ENCODE measurements at regions of chr12 and their contacts with region 1.

Region 1: DNA sequence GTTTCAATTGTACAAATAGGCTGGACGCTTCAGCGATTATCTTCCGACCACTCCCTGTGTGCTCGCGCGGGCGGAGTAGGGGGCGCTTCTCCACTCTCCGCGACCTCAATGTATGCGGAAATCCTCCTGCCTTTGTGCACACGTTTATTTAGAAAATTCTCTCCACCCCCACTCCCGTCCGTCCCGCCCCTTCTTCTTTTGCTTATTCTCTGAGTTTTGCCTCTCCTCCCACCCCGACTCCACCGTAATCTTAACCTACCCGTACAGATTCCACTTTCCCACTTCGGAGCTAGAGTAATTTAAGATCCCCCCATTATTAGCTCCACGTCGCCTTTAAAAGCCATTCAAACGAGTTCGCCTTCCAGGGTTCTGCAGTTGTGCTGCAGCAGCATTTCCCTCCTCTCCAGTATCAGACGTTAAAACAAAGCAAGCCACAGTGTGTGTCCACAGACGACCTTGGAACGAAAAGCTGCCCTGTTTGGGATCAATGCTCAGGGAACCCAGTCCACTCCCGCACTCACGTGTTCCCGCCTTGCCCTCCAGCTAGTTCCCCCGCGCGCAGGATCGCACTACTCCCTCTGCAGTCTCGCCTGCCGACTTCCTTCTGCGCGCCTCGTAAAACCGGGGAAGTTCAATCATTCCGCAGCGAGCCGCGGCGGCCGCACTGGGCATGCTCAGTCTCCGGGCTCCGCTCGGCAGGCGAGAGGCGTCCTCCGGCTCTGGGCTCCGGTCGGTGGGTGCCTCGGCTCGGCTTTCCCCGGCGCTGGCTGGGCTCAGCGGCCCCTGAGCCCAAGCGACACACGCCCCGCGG is at the start of gene ANO6:
- DNase-seq: peak; percentile 81 to 91 (median 85)
- ATAC-seq: peak; percentile 87
- H3K4me3 ChIP-seq: peak within 1 kb of the TSS; percentile 85
- H3K27ac ChIP-seq: peak within 1 kb of the TSS; percentile 97
- H3K4me1 ChIP-seq: peaks cover 9 to 12% of the 10 kb centered on the region in 2 experiments; a peak in 4 of 5 replicates
- H3K27me3 ChIP-seq: no peaks in the 10 kb centered on the region
- CTCF ChIP-seq: peak; percentile 29 to 61 (median 54); a peak in 5 of 6 replicates
- EP300 ChIP-seq: peak; percentile 46; the same call in 1 of the 2 replicates
- POLR2A ChIP-seq: peak; percentile 89
- RAD21 ChIP-seq: peak in 1 of 2 experiments; percentile 40; a peak in 3 of 4 replicates
- polyA plus RNA-seq, gene ANO6: 3.5 to 5.6 TPM

Region 2: GRCh38 chr12:45089411-45090115 is 126.1 kb before region 1 on chr12:
- CTCF ChIA-PET with region 1: no interaction called
- POLR2A ChIA-PET with region 1: no interaction called
- in situ Hi-C with region 1: no loop called
- intact Hi-C with region 1: no loop called
- DNase-seq: no peak
- ATAC-seq: no peak
- H3K4me3 ChIP-seq: no peak overlapping the region
- H3K27ac ChIP-seq: no peak overlapping the region
- H3K4me1 ChIP-seq: no peaks in the 10 kb centered on the region
- H3K27me3 ChIP-seq: no peaks in the 10 kb centered on the region
- CTCF ChIP-seq: no peak
- EP300 ChIP-seq: no peak
- POLR2A ChIP-seq: no peak
- RAD21 ChIP-seq: no peak

Region 3: GRCh38 chr12:45170456-45171042 is 45.1 kb before region 1 on chr12:
- CTCF ChIA-PET with region 1: interaction called, 3 read pairs
- POLR2A ChIA-PET with region 1: no interaction called
- in situ Hi-C with region 1: no loop called
- intact Hi-C with region 1: loop called (anchors 1 kb)
- DNase-seq: peak; percentile 69 to 83 (median 78)
- ATAC-seq: peak; percentile 93
- H3K4me3 ChIP-seq: no peak overlapping the region
- H3K27ac ChIP-seq: no peak overlapping the region
- H3K4me1 ChIP-seq: peaks cover 0 to 3% of the 10 kb centered on the region in 2 experiments; a peak in 1 of 5 replicates
- H3K27me3 ChIP-seq: no peaks in the 10 kb centered on the region
- CTCF ChIP-seq: peak; percentile 78 to 87 (median 86)
- EP300 ChIP-seq: no peak
- POLR2A ChIP-seq: no peak
- RAD21 ChIP-seq: peak; percentile 81 to 89

Region 4: GRCh38 chr12:45227316-45228067 is 11.9 kb after region 1 on chr12:
- CTCF ChIA-PET with region 1: no interaction called
- POLR2A ChIA-PET with region 1: interaction called, 14 read pairs
- in situ Hi-C with region 1: no loop called
- intact Hi-C with region 1: no loop called
- DNase-seq: peak in 2 of 4 experiments; percentile 40 to 63
- ATAC-seq: peak; percentile 84
- H3K4me3 ChIP-seq: no peak overlapping the region
- H3K27ac ChIP-seq: peak overlapping the region; percentile 13; the same call in 1 of the 3 replicates
- H3K4me1 ChIP-seq: peaks cover 4 to 22% of the 10 kb centered on the region in 2 experiments; a peak in 4 of 5 replicates
- H3K27me3 ChIP-seq: no peaks in the 10 kb centered on the region
- CTCF ChIP-seq: no peak
- EP300 ChIP-seq: peak; percentile 76
- POLR2A ChIP-seq: no peak
- RAD21 ChIP-seq: no peak

Region 5: DNA sequence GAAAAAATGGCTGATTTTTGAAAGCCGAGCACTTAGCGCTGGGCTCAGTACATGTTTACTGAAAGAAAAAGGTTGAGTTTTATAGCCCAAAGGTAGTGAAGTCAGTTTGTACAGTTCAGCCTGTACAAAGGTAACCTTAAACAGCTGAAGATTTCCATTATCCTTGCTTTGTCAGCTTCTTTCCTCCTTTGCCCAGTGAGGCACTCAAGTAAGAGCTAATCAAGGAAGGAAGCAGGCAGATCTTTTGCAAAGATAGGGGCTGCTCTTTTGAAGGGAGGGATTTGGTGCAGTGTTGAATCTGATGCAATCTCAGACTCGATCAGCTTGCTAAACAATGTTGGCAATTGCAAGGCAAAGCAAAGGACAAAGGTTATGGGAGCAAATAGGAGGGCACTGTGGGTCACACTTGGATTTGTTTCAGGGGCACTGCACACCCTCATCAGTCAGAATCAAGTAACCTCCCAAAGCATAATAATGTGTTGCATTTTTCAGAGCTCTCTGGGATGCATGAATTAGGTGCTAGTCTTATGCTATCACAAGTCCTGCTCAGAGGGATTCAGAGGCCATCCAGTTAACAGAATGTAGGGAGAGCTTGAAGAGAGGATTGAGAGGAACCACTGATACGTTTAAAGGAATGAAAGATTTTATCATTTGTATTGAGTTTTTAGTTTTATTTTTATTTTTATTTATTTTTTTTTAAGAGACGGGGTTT is 44.6 kb after region 1 on chr12:
- CTCF ChIA-PET with region 1: no interaction called
- POLR2A ChIA-PET with region 1: no interaction called
- in situ Hi-C with region 1: no loop called
- intact Hi-C with region 1: loop called (anchors 5 kb)
- DNase-seq: no peak
- ATAC-seq: peak; percentile 71
- H3K4me3 ChIP-seq: no peak overlapping the region
- H3K27ac ChIP-seq: no peak overlapping the region
- H3K4me1 ChIP-seq: peaks cover 4 to 25% of the 10 kb centered on the region in 2 experiments; a peak in 3 of 5 replicates
- H3K27me3 ChIP-seq: no peaks in the 10 kb centered on the region
- CTCF ChIP-seq: no peak
- EP300 ChIP-seq: no peak; the same call in 1 of the 2 replicates
- POLR2A ChIP-seq: no peak
- RAD21 ChIP-seq: no peak

Region 6: GRCh38 chr12:45336331-45337064 is 120.9 kb after region 1 on chr12:
- CTCF ChIA-PET with region 1: interaction called, 3 read pairs
- POLR2A ChIA-PET with region 1: no interaction called
- in situ Hi-C with region 1: no loop called
- intact Hi-C with region 1: loop called (anchors 5 kb)
- DNase-seq: peak in 2 of 4 experiments; percentile 14 to 54
- ATAC-seq: peak; percentile 79
- H3K4me3 ChIP-seq: no peak overlapping the region
- H3K27ac ChIP-seq: peak overlapping the region; percentile 80; the same call in 2 of the 3 replicates
- H3K4me1 ChIP-seq: peaks cover 0 to 28% of the 10 kb centered on the region in 2 experiments; a peak in 3 of 5 replicates
- H3K27me3 ChIP-seq: no peaks in the 10 kb centered on the region
- CTCF ChIP-seq: no peak
- EP300 ChIP-seq: no peak
- POLR2A ChIP-seq: no peak
- RAD21 ChIP-seq: no peak

Region 7: GRCh38 chr12:45728630-45729232 is 513.1 kb after region 1 on chr12:
- CTCF ChIA-PET with region 1: no interaction called
- POLR2A ChIA-PET with region 1: no interaction called
- in situ Hi-C with region 1: no loop called
- intact Hi-C with region 1: loop called (anchors 5 kb)
- DNase-seq: peak; percentile 72 to 97 (median 80)
- ATAC-seq: peak; percentile 73
- H3K4me3 ChIP-seq: peak overlapping the region; percentile 71
- H3K27ac ChIP-seq: peak overlapping the region; percentile 95
- H3K4me1 ChIP-seq: peaks cover 4 to 6% of the 10 kb centered on the region in 2 experiments; a peak in 3 of 5 replicates
- H3K27me3 ChIP-seq: no peaks in the 10 kb centered on the region
- CTCF ChIP-seq: peak; percentile 89 to 98 (median 97)
- EP300 ChIP-seq: peak; percentile 72
- POLR2A ChIP-seq: peak; percentile 95
- RAD21 ChIP-seq: peak; percentile 43 to 61

Region 8: GRCh38 chr12:46259713-46260112 is 1044.1 kb after region 1 on chr12:
- CTCF ChIA-PET with region 1: no interaction called
- POLR2A ChIA-PET with region 1: no interaction called
- in situ Hi-C with region 1: no loop called
- intact Hi-C with region 1: loop called (anchors 10 kb)
- DNase-seq: peak in 2 of 4 experiments; percentile 36 to 57
- ATAC-seq: peak; percentile 40
- H3K4me3 ChIP-seq: no peak overlapping the region
- H3K27ac ChIP-seq: no peak overlapping the region
- H3K4me1 ChIP-seq: peaks cover 6 to 49% of the 10 kb centered on the region in 2 experiments; a peak in 4 of 5 replicates
- H3K27me3 ChIP-seq: no peaks in the 10 kb centered on the region
- CTCF ChIP-seq: no peak
- EP300 ChIP-seq: no peak
- POLR2A ChIP-seq: no peak
- RAD21 ChIP-seq: no peak